CD4-positive, alpha-beta T cell (primary cell): ENCODE measurements at regions of chr19 and their contacts with region 1.

Region 1: DNA sequence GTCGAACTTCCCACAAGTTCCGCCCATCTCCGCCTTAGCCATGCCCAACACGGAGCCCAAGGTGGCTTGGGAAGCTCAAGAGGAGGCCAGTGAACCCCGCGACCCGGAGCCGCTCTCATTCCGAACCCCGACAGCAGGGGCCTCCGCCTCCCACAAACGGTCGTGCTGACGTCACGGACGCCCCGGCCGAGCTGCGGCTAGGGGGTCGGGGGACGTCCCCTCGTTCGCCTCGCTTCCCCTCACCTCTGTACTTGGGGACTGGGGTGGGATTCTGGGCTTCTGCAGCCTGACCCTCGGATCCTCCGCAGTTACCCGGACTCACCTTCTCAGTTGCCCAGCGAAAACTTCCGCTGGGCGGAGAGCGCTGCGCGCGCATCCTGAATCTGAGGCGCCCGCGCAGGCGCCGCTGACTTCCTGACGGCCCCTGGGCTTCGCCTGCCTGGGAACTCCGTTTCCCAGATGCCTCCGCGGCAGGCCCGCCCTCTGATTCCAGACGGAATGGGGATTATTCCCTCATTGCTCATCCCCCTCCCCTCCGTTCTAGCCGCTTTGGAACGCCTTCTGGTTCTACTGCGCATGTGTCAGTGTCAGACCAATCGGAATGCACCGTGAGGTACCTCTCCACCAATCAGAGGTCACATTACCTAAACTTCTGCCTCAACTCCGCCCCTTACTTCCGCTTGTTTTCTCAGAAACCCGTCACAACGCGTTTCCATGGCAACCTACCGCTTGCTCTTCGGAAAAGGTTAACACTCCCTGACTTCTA is at the start of gene VRK3:
- DNase-seq: peak; percentile 95 to 100 (median 98)
- ATAC-seq: peak; percentile 83
- H3K4me3 ChIP-seq: peak within 1 kb of the TSS; percentile 94
- H3K4me3 Mint-ChIP-seq: peak within 1 kb of the TSS; percentile 87
- H3K27ac ChIP-seq: peak within 1 kb of the TSS; percentile 96 to 98
- H3K27ac Mint-ChIP-seq: peak within 1 kb of the TSS; percentile 94
- H3K4me1 ChIP-seq: peaks cover 49% of the 10 kb centered on the region
- H3K4me1 Mint-ChIP-seq: peaks cover 59% of the 10 kb centered on the region
- H3K27me3 ChIP-seq: no peaks in the 10 kb centered on the region
- H3K27me3 Mint-ChIP-seq: no peaks in the 10 kb centered on the region
- CTCF ChIP-seq: no peak
- total RNA-seq, gene VRK3: 65.1 to 65.4 TPM

Region 2: DNA sequence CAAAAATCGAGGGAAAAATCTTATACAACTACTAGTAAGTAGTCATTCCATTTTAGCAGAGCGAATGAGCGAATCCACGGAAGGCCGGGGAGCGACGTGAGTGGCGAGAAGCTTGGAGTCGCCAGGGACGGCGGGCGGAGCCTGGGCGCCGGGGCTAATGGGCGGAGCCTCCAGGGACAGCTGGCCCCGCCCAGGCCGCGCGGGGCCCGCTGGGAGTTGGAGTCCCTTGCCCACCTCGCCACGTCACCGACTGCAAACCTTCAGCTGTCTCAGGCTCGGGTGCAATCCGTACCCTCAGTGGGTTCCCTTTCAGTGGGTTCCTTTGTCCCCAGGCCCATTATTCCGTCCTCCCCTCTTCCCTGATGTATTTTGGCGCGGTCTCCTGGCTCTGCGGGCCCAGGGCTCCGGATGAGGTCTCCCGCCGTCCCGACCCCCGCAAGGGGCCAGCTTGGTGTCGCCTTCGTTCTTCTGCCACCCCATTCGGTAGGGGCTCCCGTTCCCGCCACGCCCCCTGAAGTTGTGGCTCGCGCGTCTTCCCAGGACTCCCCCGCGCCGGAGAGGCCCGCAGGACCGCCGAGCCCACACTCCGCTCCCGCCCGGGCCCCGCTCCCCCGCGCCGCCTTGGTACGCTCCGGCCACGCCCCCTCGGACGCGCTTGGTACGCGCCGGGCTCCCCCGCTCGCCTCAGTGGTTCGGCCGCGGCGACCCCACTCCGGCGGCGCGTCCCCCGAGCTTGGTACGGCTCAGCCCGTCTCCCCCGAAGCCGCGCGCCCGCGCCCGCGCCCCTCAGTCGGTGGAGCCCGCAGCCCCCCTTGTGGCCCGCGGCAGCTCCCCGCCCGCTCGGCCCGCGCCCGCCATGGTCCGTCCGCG is 174.5 kb before region 1 on chr19 and contains the start of gene PTOV1:
- CTCF ChIA-PET with region 1: no interaction called
- POLR2A ChIA-PET with region 1: no interaction called
- intact Hi-C with region 1: no loop called
- DNase-seq: peak; percentile 77 to 95 (median 84)
- ATAC-seq: peak; percentile 87
- H3K4me3 ChIP-seq: peak within 1 kb of the TSS; percentile 84
- H3K4me3 Mint-ChIP-seq: peak within 1 kb of the TSS; percentile 98
- H3K27ac ChIP-seq: peak within 1 kb of the TSS; percentile 94 to 95
- H3K27ac Mint-ChIP-seq: peak within 1 kb of the TSS; percentile 94
- H3K4me1 ChIP-seq: peaks cover 54% of the 10 kb centered on the region
- H3K4me1 Mint-ChIP-seq: peaks cover 35% of the 10 kb centered on the region
- H3K27me3 ChIP-seq: no peaks in the 10 kb centered on the region
- H3K27me3 Mint-ChIP-seq: no peaks in the 10 kb centered on the region
- CTCF ChIP-seq: no peak
- total RNA-seq, gene PTOV1: 127 to 134 TPM

Region 3: DNA sequence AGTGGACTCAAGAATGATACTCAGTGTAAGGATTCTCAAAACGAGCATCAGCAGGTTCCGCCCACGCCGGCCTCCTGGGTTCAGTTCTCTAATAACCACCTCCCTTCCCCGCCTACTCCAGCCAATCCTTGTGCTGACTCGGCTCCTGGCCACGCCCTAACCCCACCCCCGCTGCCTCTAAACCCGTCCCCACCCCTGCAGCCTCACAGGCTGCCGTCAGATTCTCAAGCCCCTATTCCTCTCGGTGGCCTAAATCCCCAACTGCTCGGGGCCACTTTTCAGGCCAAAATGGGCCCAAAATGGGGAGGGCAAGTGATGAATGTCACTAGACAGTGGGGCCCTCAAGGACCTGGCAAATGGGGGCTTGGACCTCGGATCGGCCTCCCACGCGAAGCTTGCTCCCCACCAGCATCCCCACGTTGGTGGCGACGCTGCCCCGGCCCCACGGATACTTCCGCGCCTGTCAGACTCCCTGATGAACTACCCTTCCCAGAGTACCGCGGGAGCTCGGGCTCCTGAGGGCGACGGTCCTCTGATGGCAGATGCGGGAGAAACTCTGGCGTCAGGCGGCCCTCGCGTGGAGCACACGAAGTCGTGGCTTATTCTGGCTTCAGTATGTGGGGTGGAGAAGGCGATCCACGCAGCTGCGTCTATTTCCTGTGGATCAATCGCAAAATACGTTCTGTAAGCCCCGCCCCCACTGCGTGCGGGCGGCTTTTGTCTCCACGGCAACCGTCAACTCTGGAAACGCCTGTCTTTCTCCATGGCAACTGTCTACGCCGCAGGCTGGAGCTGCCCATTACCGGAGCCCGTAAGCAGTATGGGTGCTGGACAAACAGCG is 25.4 kb after region 1 on chr19:
- CTCF ChIA-PET with region 1: no interaction called
- POLR2A ChIA-PET with region 1: interaction called, 4 read pairs
- intact Hi-C with region 1: loop called (anchors 2 kb)
- DNase-seq: peak; percentile 64 to 95 (median 81)
- ATAC-seq: peak; percentile 82
- H3K4me3 ChIP-seq: peak overlapping the region; percentile 75
- H3K4me3 Mint-ChIP-seq: peak overlapping the region; percentile 93
- H3K27ac ChIP-seq: peak overlapping the region; percentile 69 to 89
- H3K27ac Mint-ChIP-seq: peak overlapping the region; percentile 94
- H3K4me1 ChIP-seq: peaks cover 20% of the 10 kb centered on the region
- H3K4me1 Mint-ChIP-seq: peaks cover 18% of the 10 kb centered on the region
- H3K27me3 ChIP-seq: no peaks in the 10 kb centered on the region
- H3K27me3 Mint-ChIP-seq: peaks cover under 1% of the 10 kb centered on the region
- CTCF ChIP-seq: no peak

Region 4: DNA sequence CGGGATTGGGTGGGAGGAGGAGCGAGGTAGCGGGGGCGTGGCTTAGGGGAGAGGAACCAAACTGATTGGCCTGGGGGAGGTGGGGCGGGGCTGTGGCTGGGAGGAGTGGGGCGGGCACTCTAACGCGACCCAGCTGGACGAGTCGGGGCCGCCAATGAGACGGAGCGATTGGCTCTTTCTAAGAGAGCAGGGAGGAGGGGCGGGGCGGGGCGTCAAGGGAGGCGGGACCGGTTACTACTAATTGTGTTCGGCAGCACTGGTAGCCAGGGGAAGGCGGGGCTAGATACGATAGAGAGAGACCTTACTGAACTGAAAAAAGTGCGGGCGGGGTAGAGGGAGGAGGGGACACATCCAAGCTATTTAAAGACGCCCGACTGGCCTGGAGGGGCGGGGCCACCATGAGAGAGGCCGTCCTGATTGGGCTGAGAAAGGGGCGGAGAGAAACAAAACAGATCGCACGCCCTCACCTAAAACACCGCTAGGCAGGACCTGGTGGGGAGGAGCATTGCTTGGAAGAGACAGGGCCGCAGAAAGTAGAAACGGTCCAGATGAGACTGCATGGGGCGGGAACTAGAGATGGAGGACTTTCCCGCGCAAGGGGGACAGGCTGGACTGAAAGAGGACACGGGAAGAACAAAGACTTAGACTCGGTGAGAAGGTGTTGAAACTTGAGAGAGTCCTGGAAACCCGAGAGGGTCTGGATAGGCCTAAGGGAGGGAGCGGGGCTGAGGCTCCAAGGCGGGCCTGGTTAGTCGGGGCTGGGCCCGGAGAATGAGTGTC is 304.1 kb after region 1 on chr19 and contains the start of gene KCNC3:
- CTCF ChIA-PET with region 1: interaction called, 3 read pairs
- POLR2A ChIA-PET with region 1: no interaction called
- intact Hi-C with region 1: loop called in 1 of 2 experiments (anchors 5 kb)
- DNase-seq: peak; percentile 79 to 96 (median 92)
- ATAC-seq: peak; percentile 60
- H3K4me3 ChIP-seq: peak within 1 kb of the TSS; percentile 32
- H3K4me3 Mint-ChIP-seq: peak within 1 kb of the TSS; percentile 87
- H3K27ac ChIP-seq: no peak within 1 kb of the TSS
- H3K27ac Mint-ChIP-seq: peak within 1 kb of the TSS; percentile 83
- H3K4me1 ChIP-seq: peaks cover 84% of the 10 kb centered on the region
- H3K4me1 Mint-ChIP-seq: peaks cover 81% of the 10 kb centered on the region
- H3K27me3 ChIP-seq: peaks cover 62 to 63% of the 10 kb centered on the region in 2 experiments
- H3K27me3 Mint-ChIP-seq: peaks cover 73% of the 10 kb centered on the region
- CTCF ChIP-seq: no peak
- total RNA-seq, gene KCNC3: 1.6 to 2.0 TPM

Region 5: DNA sequence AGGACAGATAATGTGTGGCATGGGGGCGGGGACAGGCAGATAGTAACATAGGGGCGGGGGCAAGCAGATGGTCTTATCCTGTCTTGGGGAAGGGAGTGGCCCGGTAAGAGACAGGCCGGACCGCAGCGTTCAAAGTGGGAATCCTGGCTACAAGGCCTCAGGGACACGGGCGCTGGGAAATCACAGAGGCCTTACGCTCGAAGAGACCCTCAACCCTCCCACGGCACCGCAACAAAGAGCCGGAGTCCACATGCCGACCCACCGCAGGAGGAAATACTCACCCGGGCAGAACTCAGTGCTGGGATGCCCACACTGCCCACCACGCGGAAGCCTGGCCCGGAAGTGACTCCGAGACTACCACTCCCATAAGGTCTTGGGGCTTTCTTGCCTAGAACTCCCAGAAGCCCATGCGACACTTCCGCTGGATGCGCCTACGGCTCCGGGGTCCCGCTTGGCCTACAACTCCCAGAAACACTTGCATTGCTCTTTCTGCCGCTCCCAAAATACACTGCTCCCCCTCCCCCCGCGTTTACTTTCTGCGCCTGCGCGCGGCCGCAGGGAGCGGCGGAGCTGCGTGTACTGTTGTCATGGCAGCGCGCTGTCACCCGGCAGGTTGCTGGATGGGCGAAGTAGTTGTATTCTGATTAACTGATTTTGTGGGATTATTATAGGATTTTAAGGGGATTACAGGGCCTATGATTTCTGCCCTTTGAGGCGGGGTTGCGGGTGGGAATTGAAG is 1083.0 kb after region 1 on chr19 and contains the start of gene CTU1:
- CTCF ChIA-PET with region 1: no interaction called
- POLR2A ChIA-PET with region 1: no interaction called
- intact Hi-C with region 1: loop called in 1 of 2 experiments (anchors 10 kb)
- DNase-seq: peak; percentile 96 to 100 (median 98)
- ATAC-seq: peak; percentile 98
- H3K4me3 ChIP-seq: peak within 1 kb of the TSS; percentile 83
- H3K4me3 Mint-ChIP-seq: peak within 1 kb of the TSS; percentile 95
- H3K27ac ChIP-seq: peak within 1 kb of the TSS; percentile 60 to 63
- H3K27ac Mint-ChIP-seq: peak within 1 kb of the TSS; percentile 91
- H3K4me1 ChIP-seq: peaks cover 29% of the 10 kb centered on the region
- H3K4me1 Mint-ChIP-seq: peaks cover 38% of the 10 kb centered on the region
- H3K27me3 ChIP-seq: no peaks in the 10 kb centered on the region
- H3K27me3 Mint-ChIP-seq: no peaks in the 10 kb centered on the region
- CTCF ChIP-seq: no peak
- total RNA-seq, gene CTU1: 1.4 to 1.6 TPM